ENCODE measurements at regions of chr9 and their contacts with region 1.

Region 1: GRCh38 chr9:129884220-129885017 is 49.2 kb downstream of the USP20 start:
- DNase-seq: peak; percentile 98
- H3K4me3 Mint-ChIP-seq: peak overlapping the region; percentile 79
- H3K27ac Mint-ChIP-seq: peak overlapping the region; percentile 99
- H3K4me1 Mint-ChIP-seq: peaks cover 63% of the 10 kb centered on the region
- H3K27me3 Mint-ChIP-seq: no peaks in the 10 kb centered on the region

Region 2: DNA sequence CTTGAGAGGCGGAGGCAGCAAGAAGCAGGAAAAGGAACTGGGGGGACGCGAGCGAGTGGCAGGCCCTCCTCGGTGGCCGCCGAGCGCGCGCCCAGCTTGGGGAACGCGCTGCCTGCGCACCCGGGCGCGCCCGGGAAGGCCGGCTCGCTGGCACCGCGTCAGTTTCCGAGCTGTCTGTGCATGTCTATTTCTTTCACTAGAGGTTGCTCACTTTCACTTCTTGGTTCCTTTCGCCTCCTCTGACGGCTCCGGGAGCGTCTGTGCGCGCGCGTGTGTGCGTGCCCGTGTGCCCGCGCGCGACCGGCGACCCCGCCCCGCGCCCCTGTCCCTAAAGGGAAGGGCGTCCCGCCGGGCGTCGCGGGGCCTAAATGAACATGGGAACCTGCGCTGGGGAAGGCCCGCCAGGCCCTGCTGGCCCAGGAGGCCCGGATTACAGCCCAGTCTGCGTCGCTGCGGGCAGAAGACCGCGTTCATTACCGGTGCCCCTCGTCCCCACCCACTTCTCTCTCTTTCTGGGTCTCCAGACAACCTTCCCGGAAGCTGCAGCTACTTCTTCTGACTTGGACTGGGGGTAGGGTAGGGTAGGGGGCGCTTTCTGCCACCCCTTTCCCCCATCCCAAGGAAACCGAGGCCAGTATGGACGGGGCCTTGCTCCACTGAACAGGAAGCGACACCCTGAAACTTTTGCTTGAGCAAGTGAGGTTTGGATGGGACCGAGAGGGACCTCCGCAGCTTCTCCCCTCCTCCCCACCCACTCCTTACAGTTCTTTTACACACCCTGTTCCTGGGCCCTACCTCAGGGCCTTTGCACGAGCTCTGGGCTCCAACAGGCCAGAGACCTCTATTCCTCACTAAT is 500.6 kb before region 1 on chr9:
- CTCF ChIA-PET with region 1: no interaction called
- DNase-seq: peak; percentile 81
- H3K4me3 Mint-ChIP-seq: peak overlapping the region; percentile 64
- H3K27ac Mint-ChIP-seq: peak overlapping the region; percentile 84
- H3K4me1 Mint-ChIP-seq: peaks cover 19% of the 10 kb centered on the region
- H3K27me3 Mint-ChIP-seq: peaks cover 29% of the 10 kb centered on the region

Region 3: DNA sequence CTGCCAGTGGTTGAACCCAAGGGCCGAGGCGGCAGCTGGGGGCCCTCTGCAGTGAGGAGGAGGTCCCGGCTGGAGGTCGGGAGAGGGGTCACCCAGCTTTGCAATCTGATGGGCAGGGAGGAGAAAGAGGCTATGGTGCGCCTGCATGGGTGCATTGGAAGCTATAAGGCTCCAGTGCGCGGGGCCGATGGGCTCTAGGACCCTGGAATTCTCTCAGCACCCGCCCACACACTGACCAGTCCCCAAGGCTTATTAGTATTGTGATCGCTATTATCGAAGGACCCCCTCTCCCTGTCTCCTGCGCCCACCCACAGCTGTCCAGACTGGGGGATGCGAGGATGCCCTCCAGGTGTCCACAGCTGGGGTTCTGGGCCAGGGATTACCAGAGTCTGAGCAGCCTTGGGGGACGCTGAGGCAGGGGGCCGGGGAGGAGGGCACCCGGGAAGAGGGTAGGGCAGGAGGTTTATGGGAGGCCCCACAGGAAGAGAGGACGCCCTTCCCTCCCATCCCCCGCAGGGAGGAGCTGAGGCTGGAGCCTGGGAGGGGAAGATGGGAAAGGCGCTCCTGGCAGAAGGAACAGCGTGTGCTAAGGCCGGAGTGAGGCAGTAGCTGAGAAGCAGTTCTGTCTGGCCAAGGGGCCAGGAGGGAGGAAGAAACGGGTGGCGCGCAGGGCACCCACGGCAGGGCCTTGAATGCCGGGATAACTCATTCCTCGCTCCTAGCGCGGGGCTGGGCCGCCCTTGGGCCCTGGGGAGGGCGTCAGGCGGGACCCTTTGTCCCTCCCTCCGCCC is 287.7 kb before region 1 on chr9:
- CTCF ChIA-PET with region 1: no interaction called
- DNase-seq: no peak
- H3K4me3 Mint-ChIP-seq: no peak overlapping the region
- H3K27ac Mint-ChIP-seq: no peak overlapping the region
- H3K4me1 Mint-ChIP-seq: peaks cover 29% of the 10 kb centered on the region
- H3K27me3 Mint-ChIP-seq: peaks cover 79% of the 10 kb centered on the region

Region 4: GRCh38 chr9:129783516-129784361 is 100.7 kb before region 1 on chr9:
- CTCF ChIA-PET with region 1: no interaction called
- DNase-seq: peak; percentile 82
- H3K4me3 Mint-ChIP-seq: no peak overlapping the region
- H3K27ac Mint-ChIP-seq: no peak overlapping the region
- H3K4me1 Mint-ChIP-seq: peaks cover 3% of the 10 kb centered on the region
- H3K27me3 Mint-ChIP-seq: peaks cover 59% of the 10 kb centered on the region

Region 5: GRCh38 chr9:129826344-129826743 is 58.1 kb before region 1 on chr9:
- CTCF ChIA-PET with region 1: no interaction called
- DNase-seq: no peak
- H3K4me3 Mint-ChIP-seq: no peak overlapping the region
- H3K27ac Mint-ChIP-seq: no peak overlapping the region
- H3K4me1 Mint-ChIP-seq: peaks cover 17% of the 10 kb centered on the region
- H3K27me3 Mint-ChIP-seq: no peaks in the 10 kb centered on the region

Region 6: GRCh38 chr9:129868916-129869486 is 15.4 kb before region 1 on chr9:
- CTCF ChIA-PET with region 1: interaction called, 15 read pairs
- DNase-seq: peak; percentile 96
- H3K4me3 Mint-ChIP-seq: peak overlapping the region; percentile 67
- H3K27ac Mint-ChIP-seq: peak overlapping the region; percentile 92
- H3K4me1 Mint-ChIP-seq: peaks cover 84% of the 10 kb centered on the region
- H3K27me3 Mint-ChIP-seq: no peaks in the 10 kb centered on the region

Region 7: DNA sequence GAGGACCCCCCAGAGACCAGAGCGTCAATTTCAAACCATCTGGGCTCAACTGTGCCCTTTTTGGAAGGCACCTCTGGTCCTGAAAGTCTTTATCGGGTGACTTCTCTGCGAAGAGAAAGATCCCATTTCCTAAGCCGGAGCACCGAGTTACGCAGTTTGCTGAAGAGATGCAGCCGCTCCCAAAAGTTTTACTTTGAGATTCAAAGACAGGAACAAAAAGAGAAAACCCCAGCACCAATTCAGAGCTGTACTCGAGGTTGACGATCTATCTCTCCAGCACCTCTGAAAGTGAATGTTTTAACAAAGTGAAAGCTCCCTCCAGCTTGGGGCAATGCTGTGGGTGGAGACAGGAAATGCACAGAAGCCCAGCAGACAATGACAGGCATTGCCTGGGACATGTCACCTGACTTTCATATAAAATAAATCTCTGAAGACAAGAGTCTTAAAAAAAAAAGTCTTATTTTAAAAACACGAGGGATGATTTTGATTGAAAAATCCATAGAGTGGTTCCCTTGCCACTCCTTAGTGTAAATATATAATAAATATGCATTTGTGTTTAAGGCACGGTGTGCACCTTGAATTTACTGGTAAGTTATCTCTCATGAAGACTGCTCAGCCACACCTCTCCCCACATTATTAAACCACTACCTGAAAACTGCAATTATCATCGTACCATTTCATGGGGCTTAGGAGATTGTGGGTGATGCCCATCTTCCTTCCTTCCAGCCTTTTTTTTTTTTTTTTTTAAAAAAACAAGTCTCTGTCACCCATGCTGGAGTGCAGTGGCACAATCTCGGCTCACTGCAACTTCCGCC is 78.7 kb after region 1 on chr9:
- CTCF ChIA-PET with region 1: interaction called, 12 read pairs
- DNase-seq: peak; percentile 87
- H3K4me3 Mint-ChIP-seq: peak overlapping the region; percentile 78
- H3K27ac Mint-ChIP-seq: peak overlapping the region; percentile 98
- H3K4me1 Mint-ChIP-seq: peaks cover 76% of the 10 kb centered on the region
- H3K27me3 Mint-ChIP-seq: no peaks in the 10 kb centered on the region

Region 8: GRCh38 chr9:130041648-130042405 is 157.4 kb after region 1 on chr9:
- CTCF ChIA-PET with region 1: interaction called, 27 read pairs
- DNase-seq: no peak
- H3K4me3 Mint-ChIP-seq: peak overlapping the region; percentile 99
- H3K27ac Mint-ChIP-seq: peak overlapping the region; percentile 98
- H3K4me1 Mint-ChIP-seq: peaks cover 70% of the 10 kb centered on the region
- H3K27me3 Mint-ChIP-seq: peaks cover 3% of the 10 kb centered on the region